Ascending aorta (tissue), 2 donors: ENCODE measurements at regions of chr5 and their contacts with region 1.

Region 1: DNA sequence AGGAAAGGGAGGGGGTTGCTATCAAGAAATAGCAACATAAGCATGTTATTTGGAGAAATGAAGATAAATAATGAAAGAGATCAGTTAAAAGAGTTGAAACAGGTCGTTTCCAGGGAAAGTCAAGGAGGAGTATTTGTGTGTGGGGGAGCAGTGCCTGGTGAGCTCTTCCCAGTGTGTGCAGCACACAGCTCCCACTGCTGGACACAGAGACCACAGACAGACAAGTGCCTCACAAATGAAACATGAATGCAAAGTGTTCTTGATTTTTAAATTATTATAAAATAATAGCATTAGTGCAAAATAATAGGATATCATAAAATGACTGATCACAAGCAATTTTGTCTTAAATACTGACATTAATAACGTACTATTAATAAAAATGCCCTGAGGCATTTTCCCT is 40.8 kb downstream of the LIFR start:
- DNase-seq: no peak
- H3K4me3 ChIP-seq: no peak overlapping the region
- H3K27ac ChIP-seq: no peak overlapping the region
- H3K4me1 ChIP-seq: no peaks in the 10 kb centered on the region
- H3K27me3 ChIP-seq: no peaks in the 10 kb centered on the region
- CTCF ChIP-seq: peak in 2 of 3 experiments; percentile 16 to 28

Region 2: DNA sequence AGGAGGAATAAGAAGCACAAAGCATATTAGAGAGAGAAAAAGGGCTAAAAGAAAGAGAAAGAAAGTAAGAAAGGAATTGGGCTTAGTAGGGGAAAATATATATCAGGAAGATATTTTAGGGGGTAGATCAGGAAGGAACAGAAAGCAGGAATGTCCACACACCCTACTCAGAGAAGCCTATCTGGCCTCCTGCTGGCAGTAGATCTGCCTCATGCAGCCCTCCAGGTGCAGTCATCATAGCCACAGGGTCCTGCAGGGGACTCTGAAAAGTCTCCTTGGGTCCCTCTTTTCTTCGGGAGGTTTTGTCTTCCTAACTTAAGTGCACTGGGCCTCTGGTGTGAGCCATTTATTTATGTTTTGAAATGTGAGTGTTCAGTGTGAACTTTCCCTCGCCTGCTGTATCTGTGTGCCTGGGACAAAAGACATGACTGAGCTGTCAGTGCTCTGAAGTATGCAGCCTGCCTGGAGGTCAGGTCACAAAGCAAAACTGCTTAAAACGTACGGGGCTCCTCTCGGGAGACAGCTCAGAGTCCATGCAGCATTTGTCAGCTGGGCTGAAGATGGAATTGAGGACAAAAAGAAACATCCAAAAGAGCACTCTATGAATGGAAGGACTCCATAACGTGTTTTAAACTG is 524.3 kb before region 1 on chr5:
- intact Hi-C with region 1: no loop called
- DNase-seq: no peak
- H3K4me3 ChIP-seq: no peak overlapping the region
- H3K27ac ChIP-seq: no peak overlapping the region
- H3K4me1 ChIP-seq: no peaks in the 10 kb centered on the region
- H3K27me3 ChIP-seq: no peaks in the 10 kb centered on the region
- CTCF ChIP-seq: no peak

Region 3: DNA sequence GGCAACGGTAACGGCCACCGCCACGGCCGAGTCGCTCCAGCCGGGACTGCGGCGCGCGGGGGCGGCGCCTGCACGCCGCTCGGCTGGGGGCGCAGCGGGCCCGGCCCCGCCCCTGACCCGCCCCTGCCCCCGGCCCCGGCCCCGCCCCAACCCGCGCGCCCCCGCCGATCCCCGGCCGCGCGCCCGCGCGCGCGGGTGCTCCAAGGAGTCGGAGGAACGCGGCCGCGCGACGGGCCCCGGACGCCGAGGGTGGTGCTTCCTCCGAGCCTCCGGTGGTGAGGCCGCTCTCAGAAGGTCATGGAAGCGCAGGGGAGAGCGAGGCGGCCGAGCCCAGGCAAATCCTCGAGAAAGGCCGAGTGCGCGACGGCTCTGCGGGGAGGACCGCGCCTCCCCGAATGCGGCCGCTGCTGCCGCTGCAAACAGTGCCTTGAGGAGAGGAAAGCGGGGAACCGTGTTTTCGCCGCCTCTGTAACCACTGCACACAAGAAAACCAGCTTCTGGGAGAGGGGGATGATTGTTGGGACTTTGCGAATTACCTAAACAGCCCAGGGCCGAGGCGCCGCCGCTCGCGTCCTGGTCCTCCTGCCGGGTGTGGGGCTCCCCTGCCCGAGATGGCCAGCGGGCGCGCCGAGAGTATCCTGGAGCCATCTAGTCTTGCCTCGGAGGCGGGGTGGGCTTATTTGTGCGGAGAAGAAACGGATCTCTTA is 41.1 kb after region 1 on chr5 and contains the start of gene LIFR:
- intact Hi-C with region 1: loop called (anchors 5 kb)
- DNase-seq: peak in 1 of 2 donors; percentile 86
- H3K4me3 ChIP-seq: peak within 1 kb of the TSS; percentile 78 to 91
- H3K27ac ChIP-seq: peak within 1 kb of the TSS; percentile 91 to 99
- H3K4me1 ChIP-seq: peaks cover 0 to 9% of the 10 kb centered on the region in 2 donors
- H3K27me3 ChIP-seq: no peaks in the 10 kb centered on the region
- CTCF ChIP-seq: no peak
- total RNA-seq, gene LIFR: 116 TPM